ENCODE measurements at regions of chr10 and their contacts with region 1.

Region 1: GRCh38 chr10:30534465-30535144 is 94.9 kb downstream of the LYZL2 start:
- DNase-seq: peak; percentile 68 to 90
- ATAC-seq: peak; percentile 60 to 66 (median 65)
- H3K4me3 ChIP-seq: no peak overlapping the region
- H3K4me3 Mint-ChIP-seq: peak overlapping the region; percentile 4
- H3K27ac ChIP-seq: no peak overlapping the region
- H3K27ac Mint-ChIP-seq: peak overlapping the region in 1 of 2 donors; percentile 79
- H3K4me1 ChIP-seq: peaks cover 41% of the 10 kb centered on the region
- H3K4me1 Mint-ChIP-seq: peaks cover 41 to 42% of the 10 kb centered on the region in 2 donors
- H3K27me3 ChIP-seq: no peaks in the 10 kb centered on the region
- H3K27me3 Mint-ChIP-seq: no peaks in the 10 kb centered on the region
- CTCF ChIP-seq: peak; percentile 82

Region 2: GRCh38 chr10:30392564-30392990 is 142.0 kb before region 1 on chr10:
- intact Hi-C with region 1: loop called (anchors 1 kb)
- DNase-seq: peak; percentile 69 to 86
- ATAC-seq: peak; percentile 95 to 100 (median 100)
- H3K4me3 ChIP-seq: no peak overlapping the region
- H3K4me3 Mint-ChIP-seq: no peak overlapping the region
- H3K27ac ChIP-seq: no peak overlapping the region
- H3K27ac Mint-ChIP-seq: no peak overlapping the region
- H3K4me1 ChIP-seq: peaks cover 6% of the 10 kb centered on the region
- H3K4me1 Mint-ChIP-seq: peaks cover 4 to 5% of the 10 kb centered on the region in 2 donors
- H3K27me3 ChIP-seq: no peaks in the 10 kb centered on the region
- H3K27me3 Mint-ChIP-seq: peaks cover 6 to 16% of the 10 kb centered on the region in 2 donors
- CTCF ChIP-seq: peak; percentile 97

Region 3: GRCh38 chr10:30413996-30414576 is 120.5 kb before region 1 on chr10:
- intact Hi-C with region 1: loop called (anchors 1 kb)
- DNase-seq: peak in 1 of 2 donors; percentile 78
- ATAC-seq: peak; percentile 86 to 95 (median 94)
- H3K4me3 ChIP-seq: no peak overlapping the region
- H3K4me3 Mint-ChIP-seq: no peak overlapping the region
- H3K27ac ChIP-seq: no peak overlapping the region
- H3K27ac Mint-ChIP-seq: no peak overlapping the region
- H3K4me1 ChIP-seq: peaks cover 8% of the 10 kb centered on the region
- H3K4me1 Mint-ChIP-seq: peaks cover 14 to 18% of the 10 kb centered on the region in 2 donors
- H3K27me3 ChIP-seq: no peaks in the 10 kb centered on the region
- H3K27me3 Mint-ChIP-seq: no peaks in the 10 kb centered on the region
- CTCF ChIP-seq: peak; percentile 80

Region 4: DNA sequence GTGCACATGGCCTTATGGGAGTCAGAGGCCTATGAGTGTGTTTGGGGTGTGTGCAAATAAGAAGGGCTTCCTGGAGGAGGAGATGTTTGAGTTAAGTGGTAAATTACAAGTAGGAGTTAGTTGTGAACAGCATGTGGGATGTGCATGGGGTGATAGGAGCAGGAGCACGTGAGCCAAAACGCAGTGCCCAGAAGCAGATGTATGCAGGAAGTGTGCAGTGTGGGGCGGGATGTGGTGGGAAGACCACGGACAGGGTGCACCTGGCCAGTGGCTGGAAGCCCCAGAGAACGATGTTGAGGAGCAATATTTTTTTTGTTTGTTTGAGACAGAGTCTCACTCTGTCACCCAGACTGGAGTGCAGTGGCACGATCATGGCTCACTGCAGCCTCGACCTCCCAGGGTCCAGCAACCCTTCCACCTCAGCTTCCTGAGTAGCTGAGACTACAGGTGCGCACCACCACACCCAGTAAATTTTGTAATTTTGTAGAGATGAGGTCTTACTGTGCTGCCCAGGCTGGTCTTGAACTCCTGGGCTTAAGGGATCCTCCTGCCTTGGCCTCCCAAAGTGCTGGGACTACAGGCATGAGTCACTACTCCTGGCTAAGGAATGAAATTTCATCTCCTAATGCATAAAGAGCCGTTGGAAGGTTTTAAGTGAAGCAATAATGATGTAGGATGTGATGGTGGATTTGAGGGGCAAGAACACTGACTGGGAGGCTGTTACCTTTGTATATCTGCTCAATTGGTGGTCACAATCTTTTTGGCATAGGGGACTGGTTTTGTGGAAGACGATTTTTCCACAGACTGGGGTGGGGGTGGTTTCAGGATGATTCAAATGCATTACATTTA is 16.6 kb after region 1 on chr10:
- intact Hi-C with region 1: no loop called
- DNase-seq: no peak
- ATAC-seq: no peak
- H3K4me3 ChIP-seq: no peak overlapping the region
- H3K4me3 Mint-ChIP-seq: no peak overlapping the region
- H3K27ac ChIP-seq: no peak overlapping the region
- H3K27ac Mint-ChIP-seq: no peak overlapping the region
- H3K4me1 ChIP-seq: peaks cover 7% of the 10 kb centered on the region
- H3K4me1 Mint-ChIP-seq: peaks cover 0 to 23% of the 10 kb centered on the region in 2 donors
- H3K27me3 ChIP-seq: no peaks in the 10 kb centered on the region
- H3K27me3 Mint-ChIP-seq: no peaks in the 10 kb centered on the region
- CTCF ChIP-seq: no peak

Region 5: DNA sequence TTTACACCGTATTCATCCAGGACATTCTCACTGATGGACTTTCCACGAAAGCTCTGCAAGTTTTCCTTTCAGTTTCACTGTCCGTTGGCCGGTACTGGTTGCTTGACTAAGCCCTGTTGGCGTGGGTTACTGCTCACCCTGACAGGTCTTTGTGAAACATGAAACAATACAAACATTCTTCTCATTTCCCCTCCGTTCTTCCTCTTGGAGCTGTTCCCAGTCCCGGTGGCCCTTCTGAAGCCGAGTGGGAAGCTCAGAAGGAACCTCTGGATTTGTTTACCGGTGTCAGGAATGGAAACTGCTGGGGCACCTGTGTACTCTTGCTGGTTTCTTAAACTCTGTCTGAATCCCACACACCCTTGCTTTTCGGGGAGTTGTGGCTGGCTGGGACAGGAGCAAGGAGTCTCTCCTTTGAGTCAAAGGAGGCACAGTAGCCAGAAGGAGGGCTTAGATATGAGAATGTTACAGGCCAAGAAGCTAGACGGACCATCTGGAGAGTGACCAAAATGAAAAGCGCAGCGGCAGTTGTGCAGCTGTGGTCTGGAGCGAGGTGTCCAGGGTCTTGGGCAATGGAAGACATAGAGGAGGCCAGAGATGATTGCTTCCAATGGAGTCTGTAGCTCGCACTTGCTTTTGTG is 49.3 kb after region 1 on chr10:
- intact Hi-C with region 1: no loop called
- DNase-seq: peak in 1 of 2 donors; percentile 24
- ATAC-seq: peak; percentile 77 to 90 (median 84)
- H3K4me3 ChIP-seq: peak overlapping the region; percentile 21
- H3K4me3 Mint-ChIP-seq: peak overlapping the region; percentile 89
- H3K27ac ChIP-seq: peak overlapping the region; percentile 43
- H3K27ac Mint-ChIP-seq: peak overlapping the region; percentile 71 to 80
- H3K4me1 ChIP-seq: peaks cover 19% of the 10 kb centered on the region
- H3K4me1 Mint-ChIP-seq: peaks cover 15 to 16% of the 10 kb centered on the region in 2 donors
- H3K27me3 ChIP-seq: no peaks in the 10 kb centered on the region
- H3K27me3 Mint-ChIP-seq: no peaks in the 10 kb centered on the region
- CTCF ChIP-seq: no peak

Region 6: GRCh38 chr10:30598105-30598776 is 63.6 kb after region 1 on chr10:
- intact Hi-C with region 1: no loop called
- DNase-seq: no peak
- ATAC-seq: no peak
- H3K4me3 ChIP-seq: no peak overlapping the region
- H3K4me3 Mint-ChIP-seq: no peak overlapping the region
- H3K27ac ChIP-seq: no peak overlapping the region
- H3K27ac Mint-ChIP-seq: no peak overlapping the region
- H3K4me1 ChIP-seq: no peaks in the 10 kb centered on the region
- H3K4me1 Mint-ChIP-seq: peaks cover 0 to 4% of the 10 kb centered on the region in 2 donors
- H3K27me3 ChIP-seq: no peaks in the 10 kb centered on the region
- H3K27me3 Mint-ChIP-seq: peaks cover 12 to 16% of the 10 kb centered on the region in 2 donors
- CTCF ChIP-seq: no peak

Region 7: DNA sequence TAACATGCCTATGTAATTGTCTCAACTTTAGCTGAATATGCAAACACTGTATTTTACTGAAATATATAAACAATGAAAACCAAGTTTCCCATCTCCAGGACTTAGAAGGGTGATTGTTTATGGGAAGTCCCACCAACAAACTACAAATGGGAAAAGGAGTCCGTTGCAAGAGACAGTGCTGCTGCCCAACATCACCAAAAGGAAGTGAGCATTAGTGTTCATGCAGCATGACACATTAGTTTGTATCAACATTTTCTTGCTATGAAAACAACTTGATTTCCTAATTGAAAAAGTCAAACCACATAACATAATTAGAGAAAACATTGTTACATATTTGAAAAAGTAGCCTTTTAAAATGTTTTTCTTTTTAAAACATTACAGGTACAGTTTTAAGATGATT is 358.6 kb after region 1 on chr10:
- intact Hi-C with region 1: no loop called
- DNase-seq: no peak
- ATAC-seq: no peak
- H3K4me3 ChIP-seq: no peak overlapping the region
- H3K4me3 Mint-ChIP-seq: no peak overlapping the region
- H3K27ac ChIP-seq: no peak overlapping the region
- H3K27ac Mint-ChIP-seq: no peak overlapping the region
- H3K4me1 ChIP-seq: no peaks in the 10 kb centered on the region
- H3K4me1 Mint-ChIP-seq: no peaks in the 10 kb centered on the region
- H3K27me3 ChIP-seq: no peaks in the 10 kb centered on the region
- H3K27me3 Mint-ChIP-seq: no peaks in the 10 kb centered on the region
- CTCF ChIP-seq: no peak

Measured in natural killer cell (primary cell).